Common myeloid progenitor, CD34-positive (primary cell): ENCODE measurements at regions of chr14 and their contacts with region 1.

Region 1: DNA sequence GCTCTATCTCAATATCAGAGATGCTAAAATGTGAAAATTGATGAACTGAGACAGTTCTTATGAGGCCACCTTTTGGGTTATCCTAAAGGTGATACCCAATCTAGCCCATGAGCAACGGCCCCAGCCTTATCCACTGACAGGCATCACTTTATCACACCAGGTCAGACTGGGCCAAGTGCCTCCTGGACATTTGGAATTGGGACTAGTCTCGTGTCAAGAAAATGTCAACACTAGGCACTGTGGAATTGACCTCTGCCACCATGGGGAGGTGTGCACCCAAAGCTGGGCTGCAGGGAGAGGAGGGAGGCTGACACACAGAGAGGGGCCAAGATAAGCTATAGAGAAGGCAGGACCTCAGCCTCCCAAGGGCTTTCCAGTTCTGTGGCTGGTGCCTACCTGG is 78.5 kb upstream of the ZFP36L1 start:
- DNase-seq: no peak
- H3K4me3 ChIP-seq: no peak overlapping the region
- H3K27ac ChIP-seq: no peak overlapping the region
- H3K4me1 ChIP-seq: no peaks in the 10 kb centered on the region
- H3K27me3 ChIP-seq: no peaks in the 10 kb centered on the region

Region 2: GRCh38 chr14:68834816-68835215 is 36.6 kb before region 1 on chr14:
- CTCF ChIA-PET with region 1: no interaction called
- POLR2A ChIA-PET with region 1: no interaction called
- DNase-seq: peak in 1 of 3 donors; percentile 26
- H3K4me3 ChIP-seq: no peak overlapping the region
- H3K27ac ChIP-seq: no peak overlapping the region
- H3K4me1 ChIP-seq: no peaks in the 10 kb centered on the region
- H3K27me3 ChIP-seq: no peaks in the 10 kb centered on the region

Region 3: GRCh38 chr14:69107407-69108003 is 236.1 kb after region 1 on chr14:
- CTCF ChIA-PET with region 1: interaction called, 44 read pairs
- POLR2A ChIA-PET with region 1: no interaction called
- DNase-seq: peak; percentile 64 to 80 (median 73)
- H3K4me3 ChIP-seq: no peak overlapping the region
- H3K27ac ChIP-seq: no peak overlapping the region
- H3K4me1 ChIP-seq: no peaks in the 10 kb centered on the region
- H3K27me3 ChIP-seq: no peaks in the 10 kb centered on the region